Naive thymus-derived CD4-positive, alpha-beta T cell (primary cell): ENCODE measurements at regions of chr2 and their contacts with region 1.

Region 1: GRCh38 chr2:213806125-213806726 is 522.0 kb downstream of the SPAG16 start:
- DNase-seq: no peak
- ATAC-seq: no peak
- H3K4me3 ChIP-seq: no peak overlapping the region
- H3K4me3 Mint-ChIP-seq: no peak overlapping the region
- H3K27ac ChIP-seq: no peak overlapping the region
- H3K27ac Mint-ChIP-seq: no peak overlapping the region
- H3K4me1 ChIP-seq: no peaks in the 10 kb centered on the region
- H3K4me1 Mint-ChIP-seq: no peaks in the 10 kb centered on the region
- H3K27me3 ChIP-seq: no peaks in the 10 kb centered on the region
- H3K27me3 Mint-ChIP-seq: peaks cover 0 to 7% (median 0%) of the 10 kb centered on the region in 5 donors

Region 2: GRCh38 chr2:213818436-213818835 is 12.2 kb after region 1 on chr2:
- CTCF ChIA-PET with region 1: no interaction called
- POLR2A ChIA-PET with region 1: no interaction called
- intact Hi-C with region 1: no loop called
- DNase-seq: no peak
- ATAC-seq: no peak
- H3K4me3 ChIP-seq: no peak overlapping the region
- H3K4me3 Mint-ChIP-seq: no peak overlapping the region
- H3K27ac ChIP-seq: no peak overlapping the region
- H3K27ac Mint-ChIP-seq: no peak overlapping the region
- H3K4me1 ChIP-seq: no peaks in the 10 kb centered on the region
- H3K4me1 Mint-ChIP-seq: no peaks in the 10 kb centered on the region
- H3K27me3 ChIP-seq: no peaks in the 10 kb centered on the region
- H3K27me3 Mint-ChIP-seq: no peaks in the 10 kb centered on the region

Region 3: DNA sequence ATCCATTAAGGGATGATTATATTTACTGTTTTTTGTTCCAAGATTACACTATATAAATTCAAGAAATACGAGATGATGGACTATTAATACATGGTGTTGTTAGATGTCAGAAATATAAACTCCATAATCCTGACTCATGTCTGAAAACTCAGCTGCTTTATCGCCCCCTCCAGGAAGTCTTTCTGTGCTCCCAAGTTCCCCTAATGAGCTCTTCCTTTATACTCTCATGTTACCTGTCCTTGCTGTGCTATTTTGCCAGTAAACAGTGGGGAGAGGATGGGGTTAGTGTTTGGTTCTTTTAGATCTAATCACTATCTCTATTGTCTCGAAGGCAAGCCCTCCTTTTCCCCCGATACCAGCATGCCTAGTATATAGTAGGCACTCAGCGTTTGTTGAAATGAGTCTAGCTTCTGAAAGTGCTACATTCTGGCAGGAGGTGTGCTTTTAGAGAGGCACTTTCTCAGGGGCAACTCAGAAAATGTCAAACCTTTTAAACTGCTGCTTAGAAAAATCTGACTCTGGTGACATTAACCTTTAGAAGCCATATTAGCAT is 1024.6 kb after region 1 on chr2:
- CTCF ChIA-PET with region 1: no interaction called
- POLR2A ChIA-PET with region 1: no interaction called
- intact Hi-C with region 1: loop called in 1 of 2 experiments (anchors 5 kb)
- DNase-seq: peak in 2 of 9 donors; percentile 6 to 22
- ATAC-seq: no peak
- H3K4me3 ChIP-seq: no peak overlapping the region
- H3K4me3 Mint-ChIP-seq: no peak overlapping the region
- H3K27ac ChIP-seq: no peak overlapping the region
- H3K27ac Mint-ChIP-seq: no peak overlapping the region
- H3K4me1 ChIP-seq: no peaks in the 10 kb centered on the region
- H3K4me1 Mint-ChIP-seq: no peaks in the 10 kb centered on the region
- H3K27me3 ChIP-seq: no peaks in the 10 kb centered on the region
- H3K27me3 Mint-ChIP-seq: peaks cover 0 to 12% (median 5%) of the 10 kb centered on the region in 5 donors